ENCODE measurements at regions of chr15 and their contacts with region 1.

Region 1: DNA sequence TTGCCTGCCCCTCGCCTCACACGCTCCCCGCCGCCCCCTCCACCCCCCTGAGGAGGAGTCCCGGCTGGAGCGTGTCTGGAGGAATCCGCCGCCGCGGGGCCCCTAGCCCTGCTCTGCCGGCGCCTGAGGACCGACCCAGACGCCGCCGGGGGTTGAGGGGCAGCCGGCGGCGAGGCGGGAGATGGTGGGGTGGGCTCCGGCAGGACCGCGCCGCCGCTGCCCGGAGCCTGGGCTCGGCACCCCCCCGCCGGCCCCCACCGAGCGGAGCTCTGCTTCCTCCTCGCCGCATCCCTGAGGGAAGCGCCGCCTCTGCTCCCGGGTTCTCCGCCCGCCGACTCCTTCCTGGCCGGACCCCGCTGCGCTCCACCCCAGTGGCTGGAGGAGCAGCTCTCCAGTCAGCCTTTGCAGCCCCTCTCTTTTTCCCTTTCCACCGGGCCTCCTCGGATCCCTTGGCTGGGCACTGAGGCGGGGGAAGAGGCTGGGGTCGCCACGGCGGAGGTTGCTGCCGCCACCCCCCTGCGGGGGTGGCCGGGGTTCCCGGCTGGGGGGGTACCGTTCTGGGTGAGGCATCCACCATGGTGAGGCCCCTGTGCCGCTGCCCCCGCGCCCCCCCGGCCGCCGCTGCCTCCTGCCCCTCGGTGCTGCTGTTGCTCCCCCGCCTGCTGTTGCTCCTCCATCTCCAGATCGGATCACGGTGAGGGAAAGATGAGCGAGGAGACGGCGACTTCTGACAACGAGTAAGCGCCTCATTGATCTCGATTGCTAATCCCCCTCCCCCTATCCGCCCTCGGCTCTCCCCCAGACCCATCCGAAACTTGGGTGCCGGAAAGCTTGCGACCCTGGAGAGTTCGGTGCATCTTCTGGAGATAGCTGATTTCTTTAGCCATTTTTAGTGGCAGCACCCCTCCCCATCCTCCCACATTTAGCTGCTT is at the start of gene SPRED1:
- DNase-seq: peak; percentile 77 to 85 (median 83)
- ATAC-seq: peak; percentile 70
- H3K4me3 ChIP-seq: peak within 1 kb of the TSS; percentile 81
- H3K4me1 ChIP-seq: peaks cover 4% of the 10 kb centered on the region
- CTCF ChIP-seq: no peak
- total RNA-seq, gene SPRED1: 19.6 to 25.5 (median 23.1) TPM

Region 2: DNA sequence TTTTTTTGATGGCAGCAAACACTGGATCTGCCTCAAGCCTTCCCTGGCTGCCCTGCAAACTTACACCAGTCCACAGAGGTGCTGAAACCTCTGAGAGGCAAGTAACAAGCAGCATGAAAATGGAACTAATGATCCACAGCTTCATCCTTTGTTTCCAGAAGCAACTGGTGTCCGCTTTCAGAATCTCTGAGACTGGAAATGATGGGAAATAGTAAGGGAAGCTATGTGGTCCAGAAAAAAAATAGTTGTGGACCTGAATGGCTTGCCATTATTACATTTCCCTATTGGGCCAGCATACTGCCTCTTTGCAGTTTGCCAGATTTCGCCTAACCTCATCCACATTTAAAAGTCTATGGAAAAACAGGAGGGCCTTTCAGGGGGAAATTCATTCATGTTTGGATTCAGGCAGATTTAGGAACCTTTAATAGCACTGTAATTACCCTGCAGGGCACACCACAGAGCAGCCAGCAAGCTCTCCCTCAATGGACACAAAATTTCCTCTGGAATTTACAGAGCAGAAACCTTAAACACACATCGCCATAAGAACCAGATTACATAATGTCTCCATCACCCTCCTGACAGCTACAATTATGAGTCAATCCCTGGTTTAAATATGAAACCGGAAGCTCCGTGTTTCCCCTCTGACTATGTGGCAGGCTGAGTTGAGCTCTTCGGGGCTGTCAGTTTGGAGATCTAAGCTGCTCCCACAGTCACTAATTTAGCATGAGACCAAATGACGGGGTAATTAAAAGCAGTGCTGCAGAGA is 183.9 kb before region 1 on chr15:
- intact Hi-C with region 1: loop called in 1 of 2 experiments (anchors 5 kb)
- DNase-seq: peak in 1 of 3 donors; percentile 49
- ATAC-seq: peak; percentile 59
- H3K4me3 ChIP-seq: no peak overlapping the region
- H3K4me1 ChIP-seq: peaks cover 33% of the 10 kb centered on the region
- CTCF ChIP-seq: no peak

Region 3: DNA sequence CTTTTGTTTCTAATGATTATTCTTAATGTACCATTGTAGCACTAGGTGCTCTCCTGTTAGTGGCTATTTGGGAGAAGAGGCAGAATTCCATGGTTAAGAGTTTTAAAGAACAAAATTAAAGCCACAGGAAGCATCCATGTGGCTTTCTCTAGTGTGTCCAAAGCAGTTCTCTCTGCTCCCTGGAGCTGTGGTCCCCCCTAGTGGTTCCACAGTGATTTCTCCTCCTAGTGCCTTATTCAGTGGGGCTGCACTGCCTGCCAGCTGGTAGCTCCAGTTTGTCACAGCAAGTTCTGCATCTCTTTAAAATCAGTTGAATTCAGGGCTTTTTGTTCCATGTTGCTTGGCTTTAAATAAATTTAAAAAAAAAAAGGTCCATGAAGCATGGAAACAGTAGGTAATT is 161.6 kb after region 1 on chr15:
- intact Hi-C with region 1: no loop called
- DNase-seq: peak; percentile 36 to 47 (median 39)
- ATAC-seq: peak; percentile 69
- H3K4me3 ChIP-seq: no peak overlapping the region
- H3K4me1 ChIP-seq: no peaks in the 10 kb centered on the region
- CTCF ChIP-seq: no peak

Measured in mucosa of descending colon (tissue), 3 donors.